ENCODE measurements at regions of chr11 and their contacts with region 1.

Region 1: GRCh38 chr11:75365711-75366181 is 14.3 kb upstream of the ARRB1 start:
- DNase-seq: no peak
- ATAC-seq: no peak
- H3K4me3 ChIP-seq: no peak overlapping the region
- H3K27ac ChIP-seq: no peak overlapping the region
- H3K4me1 ChIP-seq: no peaks in the 10 kb centered on the region
- H3K27me3 ChIP-seq: no peaks in the 10 kb centered on the region
- CTCF ChIP-seq: no peak

Region 2: GRCh38 chr11:75073459-75074190 is 292.1 kb before region 1 on chr11:
- intact Hi-C with region 1: no loop called
- DNase-seq: no peak
- ATAC-seq: no peak
- H3K4me3 ChIP-seq: no peak overlapping the region
- H3K27ac ChIP-seq: no peak overlapping the region
- H3K4me1 ChIP-seq: no peaks in the 10 kb centered on the region
- H3K27me3 ChIP-seq: peaks cover 0 to 6% (median 2%) of the 10 kb centered on the region in 3 donors
- CTCF ChIP-seq: no peak

Region 3: GRCh38 chr11:75132080-75132479 is 233.7 kb before region 1 on chr11:
- intact Hi-C with region 1: no loop called
- DNase-seq: no peak
- ATAC-seq: no peak
- H3K4me3 ChIP-seq: no peak overlapping the region
- H3K27ac ChIP-seq: no peak overlapping the region
- H3K4me1 ChIP-seq: no peaks in the 10 kb centered on the region
- H3K27me3 ChIP-seq: peaks cover 1 to 16% (median 5%) of the 10 kb centered on the region in 3 donors
- CTCF ChIP-seq: no peak

Region 4: GRCh38 chr11:75319035-75319877 is 46.5 kb before region 1 on chr11:
- intact Hi-C with region 1: loop called in 1 of 2 experiments (anchors 1 kb)
- DNase-seq: peak in 1 of 2 donors; percentile 32
- ATAC-seq: no peak
- H3K4me3 ChIP-seq: no peak overlapping the region
- H3K27ac ChIP-seq: no peak overlapping the region
- H3K4me1 ChIP-seq: peaks cover 9% of the 10 kb centered on the region
- H3K27me3 ChIP-seq: no peaks in the 10 kb centered on the region
- CTCF ChIP-seq: no peak